GM12878 (cell line): ENCODE measurements at regions of chr18 and their contacts with region 1.

Region 1: DNA sequence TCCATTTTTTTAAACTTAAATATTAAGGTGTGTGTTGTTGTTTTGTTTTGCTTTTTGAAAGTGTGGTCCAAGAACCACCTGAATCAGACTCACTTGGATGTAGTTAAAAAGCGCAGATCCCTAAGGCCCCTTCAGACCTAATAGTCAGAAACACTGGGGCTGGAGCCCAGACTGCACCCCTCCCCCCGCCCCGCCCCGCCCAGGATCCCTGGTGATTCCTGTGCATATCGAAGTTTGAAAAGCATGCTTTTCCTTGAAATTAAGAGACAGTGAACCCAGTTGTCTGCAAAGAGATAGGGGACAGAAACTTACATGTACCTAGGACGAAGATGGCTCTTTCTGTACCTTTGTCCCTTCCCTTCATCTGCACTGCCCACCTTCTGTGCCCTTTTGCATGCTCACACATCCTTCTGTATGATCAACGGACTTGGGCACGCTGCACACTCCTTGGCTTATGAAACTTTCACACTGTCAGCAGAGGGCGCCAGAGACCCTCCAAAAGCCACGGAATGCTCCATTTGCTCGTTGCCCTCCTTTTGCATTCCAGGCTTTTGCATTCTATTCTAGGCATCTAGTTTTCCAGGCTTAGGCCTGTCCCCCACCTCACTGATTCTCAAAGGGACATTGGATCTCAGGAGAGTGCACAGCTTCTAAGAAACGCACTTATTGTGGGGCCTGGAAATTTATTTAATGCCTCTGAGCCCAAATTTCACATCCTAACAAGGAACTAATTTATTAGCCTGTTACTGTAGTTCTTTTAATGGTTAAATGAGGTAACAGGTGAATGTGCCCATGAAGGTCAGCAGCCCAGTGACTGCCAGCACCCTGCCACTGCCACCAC is 32.8 kb upstream of the SLC14A1 start:
- DNase-seq: no peak
- ATAC-seq: peak; percentile 28
- H3K4me3 ChIP-seq: no peak overlapping the region
- H3K27ac ChIP-seq: no peak overlapping the region
- H3K4me1 ChIP-seq: peaks cover 32% of the 10 kb centered on the region
- H3K27me3 ChIP-seq: no peaks in the 10 kb centered on the region
- CTCF ChIP-seq: peak; percentile 79 to 93 (median 82)
- EP300 ChIP-seq: no peak
- POLR2A ChIP-seq: no peak
- RAD21 ChIP-seq: peak; percentile 91

Region 2: DNA sequence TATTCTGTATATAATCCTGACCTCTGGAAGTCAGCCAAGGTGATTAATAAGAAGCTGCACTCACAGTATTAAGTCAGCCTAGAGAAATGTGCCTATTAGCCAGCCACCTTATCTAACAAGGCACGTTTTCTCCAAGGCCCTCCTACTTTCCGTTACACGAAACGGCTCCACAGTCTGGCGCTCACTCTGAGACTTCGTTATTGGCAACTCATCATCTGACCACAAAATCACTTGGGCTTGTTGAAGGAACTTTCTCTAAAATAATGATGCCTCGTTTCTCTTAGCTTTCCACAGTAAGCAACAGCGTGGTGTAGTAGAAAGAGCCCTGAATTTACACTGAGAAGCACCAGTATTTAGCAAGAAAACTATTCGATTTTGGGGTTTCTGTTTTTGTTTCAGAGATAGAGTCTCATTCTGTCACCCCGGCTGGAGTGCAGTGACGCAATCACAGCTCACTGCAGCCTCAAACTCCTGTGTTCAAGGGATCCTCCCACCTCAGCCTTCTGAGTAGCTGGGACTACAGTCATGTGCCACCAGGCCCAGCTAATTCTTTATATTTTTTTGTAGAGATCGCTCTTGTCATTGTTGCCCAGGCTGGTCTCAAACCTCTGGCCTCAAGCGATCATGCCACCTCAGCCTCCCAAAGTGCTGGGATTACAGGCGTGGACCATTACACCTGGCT is 20.8 kb before region 1 on chr18:
- CTCF ChIA-PET with region 1: interaction called, 189 read pairs
- POLR2A ChIA-PET with region 1: interaction called, 39 read pairs
- RAD21 ChIA-PET with region 1: interaction called, 132 read pairs
- SMC1A ChIA-PET with region 1: interaction called, 143 read pairs
- in situ Hi-C with region 1: no loop called
- intact Hi-C with region 1: loop called (anchors 1 kb)
- DNase-seq: no peak
- ATAC-seq: peak; percentile 28; the same call in 1 of the 3 replicates
- H3K4me3 ChIP-seq: no peak overlapping the region
- H3K27ac ChIP-seq: no peak overlapping the region
- H3K4me1 ChIP-seq: peaks cover 18% of the 10 kb centered on the region
- H3K27me3 ChIP-seq: no peaks in the 10 kb centered on the region
- CTCF ChIP-seq: no peak
- EP300 ChIP-seq: no peak
- POLR2A ChIP-seq: no peak
- RAD21 ChIP-seq: no peak

Region 3: GRCh38 chr18:45802608-45803492 is 111.7 kb after region 1 on chr18:
- CTCF ChIA-PET with region 1: interaction called, 13 read pairs
- POLR2A ChIA-PET with region 1: no interaction called
- RAD21 ChIA-PET with region 1: interaction called, 3 read pairs
- SMC1A ChIA-PET with region 1: no interaction called
- in situ Hi-C with region 1: no loop called
- intact Hi-C with region 1: no loop called
- DNase-seq: no peak
- ATAC-seq: no peak
- H3K4me3 ChIP-seq: no peak overlapping the region
- H3K27ac ChIP-seq: no peak overlapping the region
- H3K4me1 ChIP-seq: no peaks in the 10 kb centered on the region
- H3K27me3 ChIP-seq: no peaks in the 10 kb centered on the region
- CTCF ChIP-seq: no peak
- EP300 ChIP-seq: no peak
- POLR2A ChIP-seq: no peak
- RAD21 ChIP-seq: no peak

Region 4: DNA sequence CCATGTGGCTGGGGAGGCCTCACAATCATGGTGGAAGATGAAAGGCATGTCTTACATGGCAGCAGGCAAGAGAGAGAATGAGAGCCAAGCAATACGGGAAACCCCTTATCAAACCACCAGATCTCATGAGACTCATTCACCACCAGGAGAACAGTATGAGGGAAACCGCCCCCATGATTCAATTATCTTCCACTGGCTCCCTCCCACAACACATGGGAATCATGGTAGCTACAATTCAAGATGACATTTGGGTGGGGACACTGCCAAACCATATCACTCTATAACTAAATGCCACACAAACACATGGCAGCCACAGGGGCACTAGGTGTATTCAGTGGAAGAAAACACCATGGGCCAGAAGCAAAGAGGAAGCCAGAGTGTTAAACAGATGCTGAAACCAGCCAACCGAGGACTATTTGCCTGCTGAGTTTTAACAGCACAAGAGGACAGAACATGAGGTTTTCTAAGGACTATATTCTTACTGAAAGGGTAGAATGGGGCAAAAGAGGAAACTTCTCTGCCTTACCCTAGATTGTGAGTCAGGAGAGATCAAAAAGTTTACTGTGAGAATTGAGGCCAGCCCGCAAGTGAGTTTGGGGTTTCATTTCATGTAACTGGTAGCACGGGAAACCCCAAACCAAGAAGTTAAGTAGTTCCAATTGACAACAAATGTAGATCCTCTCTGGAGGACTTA is 183.4 kb after region 1 on chr18:
- CTCF ChIA-PET with region 1: interaction called, 126 read pairs
- POLR2A ChIA-PET with region 1: interaction called, 3 read pairs
- RAD21 ChIA-PET with region 1: interaction called, 68 read pairs
- SMC1A ChIA-PET with region 1: interaction called, 88 read pairs
- in situ Hi-C with region 1: loop called (anchors 5 kb)
- intact Hi-C with region 1: loop called (anchors 1 kb)
- DNase-seq: peak; percentile 92
- ATAC-seq: peak; percentile 94
- H3K4me3 ChIP-seq: no peak overlapping the region
- H3K27ac ChIP-seq: peak overlapping the region; percentile 86
- H3K4me1 ChIP-seq: peaks cover 20% of the 10 kb centered on the region
- H3K27me3 ChIP-seq: no peaks in the 10 kb centered on the region
- CTCF ChIP-seq: no peak
- EP300 ChIP-seq: no peak; a peak in 1 of 4 replicates
- POLR2A ChIP-seq: no peak
- RAD21 ChIP-seq: no peak

Region 5: DNA sequence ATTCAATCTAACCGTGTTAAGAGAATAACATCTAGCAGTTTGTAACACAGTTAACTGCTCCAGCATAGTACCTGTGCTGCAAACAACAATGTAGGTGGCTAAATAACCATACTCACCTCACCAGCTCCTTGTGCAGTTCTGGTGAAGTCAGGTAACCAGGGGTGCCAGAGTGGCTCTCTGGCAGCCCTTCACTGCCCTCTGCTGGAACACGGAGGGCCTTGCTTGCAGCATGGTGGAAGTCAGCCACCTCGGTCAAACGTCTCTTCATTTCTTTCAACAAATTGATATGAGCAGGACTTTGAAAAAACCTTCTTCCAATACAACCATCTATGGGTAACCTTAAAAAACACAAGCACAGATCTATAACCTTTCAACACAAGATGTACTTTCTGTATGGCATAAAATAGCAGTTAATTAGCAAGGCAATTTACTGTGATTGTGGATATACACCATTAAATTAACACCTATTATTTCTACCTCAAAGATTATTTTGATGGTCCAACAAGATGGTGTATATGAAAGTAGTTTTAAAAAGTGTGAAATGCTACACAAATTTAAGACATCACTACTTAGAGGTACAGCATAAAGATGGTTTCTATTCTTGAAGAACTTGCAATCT is 219.3 kb after region 1 on chr18:
- CTCF ChIA-PET with region 1: interaction called, 4 read pairs
- POLR2A ChIA-PET with region 1: no interaction called
- RAD21 ChIA-PET with region 1: interaction called, 3 read pairs
- SMC1A ChIA-PET with region 1: interaction called, 7 read pairs
- in situ Hi-C with region 1: no loop called
- intact Hi-C with region 1: loop called (anchors 1 kb)
- DNase-seq: peak; percentile 2
- ATAC-seq: peak; percentile 95
- H3K4me3 ChIP-seq: no peak overlapping the region
- H3K27ac ChIP-seq: no peak overlapping the region
- H3K4me1 ChIP-seq: no peaks in the 10 kb centered on the region
- H3K27me3 ChIP-seq: no peaks in the 10 kb centered on the region
- CTCF ChIP-seq: peak; percentile 71 to 81 (median 74)
- EP300 ChIP-seq: no peak
- POLR2A ChIP-seq: no peak
- RAD21 ChIP-seq: peak; percentile 66

Region 6: DNA sequence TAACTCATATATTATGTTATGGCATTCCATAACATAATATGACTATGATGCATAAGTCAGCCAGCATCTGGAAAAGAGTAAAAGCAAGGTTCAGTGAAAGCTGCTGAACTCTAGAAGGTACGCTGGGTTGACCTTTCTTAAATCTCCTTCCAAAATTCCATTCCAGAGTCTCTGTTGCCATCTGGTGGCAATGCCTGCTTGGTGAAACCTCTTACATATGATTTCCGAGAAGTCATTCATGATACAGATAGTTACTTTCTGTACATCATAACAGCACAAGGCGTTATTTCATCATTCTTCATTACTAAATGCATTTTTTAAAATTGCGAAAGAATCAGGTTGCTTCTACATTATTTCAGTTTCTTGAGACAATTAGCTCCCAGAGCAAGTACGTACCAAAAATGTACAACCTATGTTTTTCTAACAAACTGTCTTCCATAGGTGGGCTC is 282.9 kb after region 1 on chr18:
- CTCF ChIA-PET with region 1: interaction called, 30 read pairs
- POLR2A ChIA-PET with region 1: no interaction called
- RAD21 ChIA-PET with region 1: interaction called, 3 read pairs
- SMC1A ChIA-PET with region 1: interaction called, 3 read pairs
- in situ Hi-C with region 1: loop called (anchors 10 kb)
- intact Hi-C with region 1: no loop called
- DNase-seq: peak; percentile 32
- ATAC-seq: peak; percentile 90
- H3K4me3 ChIP-seq: no peak overlapping the region
- H3K27ac ChIP-seq: no peak overlapping the region
- H3K4me1 ChIP-seq: no peaks in the 10 kb centered on the region
- H3K27me3 ChIP-seq: no peaks in the 10 kb centered on the region
- CTCF ChIP-seq: peak; percentile 57 to 87 (median 64); a peak in 5 of 6 replicates
- EP300 ChIP-seq: no peak
- POLR2A ChIP-seq: no peak
- RAD21 ChIP-seq: peak; percentile 93